Panc1 (cell line): ENCODE measurements at regions of chr1 and their contacts with region 1.

Region 1: GRCh38 chr1:200877839-200878551 is 5.2 kb downstream of the GPR25 start:
- DNase-seq: no peak
- ATAC-seq: no peak
- H3K4me3 ChIP-seq: no peak overlapping the region
- H3K27ac ChIP-seq: no peak overlapping the region
- H3K4me1 ChIP-seq: no peaks in the 10 kb centered on the region
- H3K27me3 ChIP-seq: peaks cover 3% of the 10 kb centered on the region
- CTCF ChIP-seq: no peak

Region 2: GRCh38 chr1:200558866-200559459 is 319.0 kb before region 1 on chr1:
- CTCF ChIA-PET with region 1: interaction called, 14 read pairs
- POLR2A ChIA-PET with region 1: no interaction called
- in situ Hi-C with region 1: no loop called
- intact Hi-C with region 1: no loop called
- DNase-seq: peak; percentile 38
- ATAC-seq: peak; percentile 83
- H3K4me3 ChIP-seq: no peak overlapping the region
- H3K27ac ChIP-seq: no peak overlapping the region
- H3K4me1 ChIP-seq: no peaks in the 10 kb centered on the region
- H3K27me3 ChIP-seq: no peaks in the 10 kb centered on the region
- CTCF ChIP-seq: peak; percentile 75; the same call in 1 of the 2 replicates